Activated B cell treated with CpG ODN at 0.5 μM for 24 hours (primary cell): ENCODE measurements at regions of chr11 and their contacts with region 1.

Region 1: GRCh38 chr11:33773987-33774735 is at the start of gene FBXO3:
- DNase-seq: peak; percentile 80
- ATAC-seq: peak; percentile 92
- H3K4me3 Mint-ChIP-seq: peak within 1 kb of the TSS; percentile 96
- H3K27ac Mint-ChIP-seq: peak within 1 kb of the TSS; percentile 94
- H3K4me1 Mint-ChIP-seq: peaks cover 38% of the 10 kb centered on the region
- H3K27me3 Mint-ChIP-seq: peaks cover 15% of the 10 kb centered on the region
- CTCF ChIP-seq: no peak
- total RNA-seq, gene FBXO3: 22.3 and 23.5 TPM in 2 replicates

Region 2: DNA sequence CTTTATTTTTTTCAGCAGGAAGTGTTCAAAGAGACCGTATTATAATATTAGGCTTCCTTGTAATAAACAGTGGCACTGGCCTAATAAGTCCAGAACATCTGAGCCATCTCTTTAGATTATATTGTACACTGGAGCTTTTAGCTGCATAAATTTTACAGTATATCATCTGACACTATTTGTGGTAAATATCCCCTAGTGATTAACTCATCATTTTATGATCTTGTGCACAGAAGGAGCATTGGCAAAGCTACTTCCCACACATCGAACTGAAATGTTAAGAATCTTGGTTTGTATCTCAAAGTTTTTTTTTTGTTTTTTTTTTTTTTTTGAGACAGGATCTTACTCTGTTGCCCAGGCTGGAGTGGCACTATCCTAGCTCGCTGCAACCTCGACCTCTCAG is 354.2 kb before region 1 on chr11:
- CTCF ChIA-PET with region 1: no interaction called
- POLR2A ChIA-PET with region 1: no interaction called
- intact Hi-C with region 1: no loop called
- DNase-seq: no peak
- ATAC-seq: no peak
- H3K4me3 Mint-ChIP-seq: no peak overlapping the region
- H3K27ac Mint-ChIP-seq: no peak overlapping the region
- H3K4me1 Mint-ChIP-seq: no peaks in the 10 kb centered on the region
- H3K27me3 Mint-ChIP-seq: peaks cover 11% of the 10 kb centered on the region
- CTCF ChIP-seq: no peak

Region 3: GRCh38 chr11:33700425-33701271 is 73.5 kb before region 1 on chr11 and contains the start of gene C11orf91:
- CTCF ChIA-PET with region 1: no interaction called
- POLR2A ChIA-PET with region 1: no interaction called
- intact Hi-C with region 1: loop called (anchors 1 kb)
- DNase-seq: peak; percentile 97
- ATAC-seq: peak; percentile 98
- H3K4me3 Mint-ChIP-seq: peak within 1 kb of the TSS; percentile 91
- H3K27ac Mint-ChIP-seq: peak within 1 kb of the TSS; percentile 47
- H3K4me1 Mint-ChIP-seq: peaks cover 13% of the 10 kb centered on the region
- H3K27me3 Mint-ChIP-seq: peaks cover 2% of the 10 kb centered on the region
- CTCF ChIP-seq: no peak
- total RNA-seq, gene C11orf91: 0.49 TPM in 1 of 2 replicates, not detected in the other